ENCODE measurements at regions of chr9 and their contacts with region 1.

Region 1: DNA sequence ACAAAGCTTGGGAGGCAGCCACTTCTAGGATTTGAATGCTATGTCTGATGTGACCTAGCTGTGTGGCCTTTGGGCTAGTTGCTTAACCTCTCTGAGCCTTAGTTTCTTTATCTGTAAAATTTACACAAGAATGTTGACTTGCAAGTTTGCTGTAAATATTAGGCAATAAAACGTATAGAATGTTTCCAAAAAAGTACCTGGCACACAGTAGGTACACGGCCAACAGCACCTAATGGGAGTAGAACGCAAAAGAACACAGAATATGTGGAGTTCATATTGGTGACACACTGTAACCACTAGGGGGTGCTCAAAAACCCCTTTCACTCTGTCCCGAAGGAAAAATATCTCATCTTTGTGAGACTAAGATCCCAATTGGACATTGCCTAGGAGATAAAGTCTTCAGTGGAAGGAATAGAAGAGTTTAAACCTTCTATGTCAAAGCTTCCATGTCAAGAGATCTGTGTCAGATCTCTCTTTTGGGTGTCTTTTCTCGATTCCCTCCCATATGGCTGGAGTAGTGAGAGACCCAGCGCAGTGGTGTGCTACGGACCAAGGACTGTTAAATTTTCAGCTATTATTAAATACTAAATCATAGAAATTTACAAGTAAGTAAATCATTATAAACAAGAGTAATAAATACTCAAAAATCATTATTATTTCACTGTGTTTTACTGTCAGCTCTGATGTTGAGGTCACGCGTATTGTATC is 145.4 kb upstream of the RAD23B start:
- DNase-seq: no peak
- ATAC-seq: peak; percentile 65 to 77 (median 70)
- H3K4me3 ChIP-seq: peak overlapping the region; percentile 15
- H3K27ac ChIP-seq: peak overlapping the region; percentile 30
- H3K4me1 ChIP-seq: peaks cover 16% of the 10 kb centered on the region
- H3K27me3 ChIP-seq: no peaks in the 10 kb centered on the region
- CTCF ChIP-seq: peak; percentile 65

Region 2: DNA sequence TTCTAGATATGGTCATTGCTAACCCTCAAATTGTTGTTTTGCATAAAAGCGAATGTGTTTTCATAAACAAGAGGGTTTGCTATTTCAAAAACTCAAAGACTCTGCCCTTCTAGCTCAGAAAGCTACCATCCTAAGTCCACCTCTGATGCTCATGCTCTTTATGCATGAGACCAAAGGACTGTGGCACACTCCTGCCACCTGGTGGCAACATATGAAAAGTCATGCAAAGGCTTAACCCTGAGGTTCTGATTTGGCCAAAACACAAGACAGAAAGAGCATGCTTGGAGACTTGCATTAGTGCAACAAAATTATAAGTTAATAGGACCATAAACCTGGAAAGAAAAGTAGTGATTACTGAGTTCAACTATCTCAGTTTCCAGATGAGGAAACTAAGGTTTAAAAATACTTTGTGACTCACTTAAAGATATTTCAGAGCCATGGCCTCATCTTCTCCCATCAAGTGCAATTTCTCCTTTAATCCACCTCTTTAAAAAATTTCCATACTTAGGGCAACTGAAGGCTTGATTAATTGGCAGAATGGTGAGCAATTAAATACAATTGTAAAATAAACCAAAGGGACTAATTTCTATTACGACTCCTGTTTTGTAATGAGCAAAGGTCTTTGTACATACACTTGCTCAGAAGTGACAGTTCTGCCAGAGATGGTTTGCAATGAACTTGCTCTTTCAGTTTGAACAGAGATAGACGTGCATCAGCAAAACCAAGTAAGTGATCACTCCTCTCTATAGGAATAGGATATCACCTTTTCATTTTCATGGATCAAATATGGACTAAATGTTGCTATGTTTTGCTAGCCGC is 34.7 kb after region 1 on chr9:
- intact Hi-C with region 1: loop called in 1 of 2 experiments (anchors 5 kb)
- DNase-seq: peak; percentile 69 to 80
- ATAC-seq: peak; percentile 36 to 69 (median 52)
- H3K4me3 ChIP-seq: no peak overlapping the region
- H3K27ac ChIP-seq: peak overlapping the region; percentile 8
- H3K4me1 ChIP-seq: peaks cover 39% of the 10 kb centered on the region
- H3K27me3 ChIP-seq: no peaks in the 10 kb centered on the region
- CTCF ChIP-seq: peak; percentile 95